Mucosa of descending colon (tissue), 3 donors: ENCODE measurements at regions of chr5 and their contacts with region 1.

Region 1: DNA sequence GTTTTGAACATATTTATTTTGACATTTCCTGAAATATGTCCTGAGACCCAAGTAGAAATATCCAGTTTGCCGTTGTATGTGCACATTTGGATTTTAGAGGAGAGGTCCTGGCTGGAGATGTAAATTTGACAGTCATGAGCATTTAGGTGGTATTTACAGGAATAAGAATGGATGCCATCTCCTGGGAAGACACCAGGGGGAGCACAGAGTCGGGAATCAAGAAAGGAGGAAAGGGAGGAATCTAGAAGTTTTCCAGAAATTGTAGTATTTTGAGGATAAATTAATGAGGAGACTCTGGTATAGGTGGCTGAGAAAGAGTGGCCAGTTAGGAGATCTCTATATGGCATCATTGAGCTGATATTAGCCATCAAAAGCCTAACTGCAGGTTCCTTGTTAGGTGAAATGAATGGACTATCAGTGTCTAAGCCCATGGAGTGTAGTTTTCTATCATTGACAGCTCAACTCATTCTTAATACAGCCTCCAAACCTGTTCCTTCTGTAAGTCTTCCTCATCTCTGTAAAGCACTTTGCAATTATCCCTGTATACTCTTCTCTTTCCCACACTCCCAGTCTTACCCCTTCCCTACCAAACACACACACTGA is 7.2 kb downstream of the GAPT start:
- DNase-seq: peak in 1 of 3 donors; percentile 68
- ATAC-seq: peak; percentile 30
- H3K4me3 ChIP-seq: no peak overlapping the region
- H3K4me1 ChIP-seq: no peaks in the 10 kb centered on the region
- CTCF ChIP-seq: peak; percentile 46

Region 2: GRCh38 chr5:58818462-58818861 is 320.0 kb after region 1 on chr5:
- intact Hi-C with region 1: loop called in 1 of 2 experiments (anchors 10 kb)
- DNase-seq: no peak
- ATAC-seq: no peak
- H3K4me3 ChIP-seq: no peak overlapping the region
- H3K4me1 ChIP-seq: no peaks in the 10 kb centered on the region
- CTCF ChIP-seq: no peak

Region 3: GRCh38 chr5:58849921-58850667 is 351.7 kb after region 1 on chr5:
- intact Hi-C with region 1: loop called in 1 of 2 experiments (anchors 5 kb)
- DNase-seq: peak in 2 of 3 donors; percentile 18 to 44
- ATAC-seq: peak; percentile 88
- H3K4me3 ChIP-seq: no peak overlapping the region
- H3K4me1 ChIP-seq: no peaks in the 10 kb centered on the region
- CTCF ChIP-seq: no peak